ENCODE measurements at regions of chr9 and their contacts with region 1.

Region 1: DNA sequence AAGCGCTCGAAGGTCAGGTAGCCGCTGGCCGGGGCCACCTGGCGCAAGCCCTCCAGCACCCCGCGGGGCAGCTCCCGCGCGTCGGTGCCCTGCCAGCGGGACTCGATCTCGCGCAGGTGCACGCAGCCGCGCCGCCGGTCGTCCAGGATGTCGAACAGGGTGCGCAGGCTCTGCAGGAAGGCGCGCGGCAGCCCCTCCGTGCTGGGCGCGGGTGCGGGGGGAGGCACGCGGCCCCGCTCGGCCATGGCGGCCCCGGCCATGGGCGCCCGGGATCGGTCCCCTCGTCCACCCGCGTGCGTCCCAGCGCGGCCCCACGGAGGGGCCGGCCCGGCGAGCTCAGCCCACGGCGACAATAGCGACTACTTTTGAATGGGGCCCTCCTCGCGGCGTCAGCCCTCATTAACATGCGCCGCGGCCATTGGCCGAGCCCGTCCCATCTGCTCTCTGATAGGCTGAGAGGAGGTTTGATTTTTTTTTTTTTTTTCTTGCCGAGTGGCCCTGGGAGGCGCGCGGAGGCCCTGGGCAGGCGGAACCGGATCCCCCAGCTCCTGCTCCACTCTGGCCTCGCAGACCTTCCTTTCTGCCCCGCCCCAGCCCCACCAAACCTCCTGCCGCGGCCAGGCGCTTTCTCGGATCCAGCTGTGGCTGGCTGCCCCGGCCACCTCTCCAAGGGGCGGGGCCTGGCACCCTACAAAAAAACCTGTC is at the start of gene SAPCD2:
- DNase-seq: peak; percentile 90
- ATAC-seq: peak; percentile 90
- H3K4me3 Mint-ChIP-seq: peak within 1 kb of the TSS; percentile 82
- H3K27ac Mint-ChIP-seq: peak within 1 kb of the TSS; percentile 91
- H3K4me1 Mint-ChIP-seq: peaks cover 22% of the 10 kb centered on the region
- H3K27me3 Mint-ChIP-seq: no peaks in the 10 kb centered on the region
- total RNA-seq, gene SAPCD2: 26.4 to 30.0 TPM

Region 2: GRCh38 chr9:137086531-137087408 is 16.4 kb after region 1 on chr9 and contains the start of gene MAN1B1:
- POLR2A ChIA-PET with region 1: interaction called, 75 read pairs
- DNase-seq: peak; percentile 99
- ATAC-seq: peak; percentile 89
- H3K4me3 Mint-ChIP-seq: peak within 1 kb of the TSS; percentile 92
- H3K27ac Mint-ChIP-seq: peak within 1 kb of the TSS; percentile 93
- H3K4me1 Mint-ChIP-seq: peaks cover 23% of the 10 kb centered on the region
- H3K27me3 Mint-ChIP-seq: no peaks in the 10 kb centered on the region
- total RNA-seq, gene MAN1B1: 63.2 to 63.9 TPM

Region 3: GRCh38 chr9:137095664-137096517 is 25.5 kb after region 1 on chr9:
- POLR2A ChIA-PET with region 1: interaction called, 17 read pairs
- DNase-seq: peak; percentile 87
- ATAC-seq: peak; percentile 99
- H3K4me3 Mint-ChIP-seq: peak overlapping the region; percentile 85
- H3K27ac Mint-ChIP-seq: peak overlapping the region; percentile 96
- H3K4me1 Mint-ChIP-seq: peaks cover 16% of the 10 kb centered on the region
- H3K27me3 Mint-ChIP-seq: no peaks in the 10 kb centered on the region

Region 4: DNA sequence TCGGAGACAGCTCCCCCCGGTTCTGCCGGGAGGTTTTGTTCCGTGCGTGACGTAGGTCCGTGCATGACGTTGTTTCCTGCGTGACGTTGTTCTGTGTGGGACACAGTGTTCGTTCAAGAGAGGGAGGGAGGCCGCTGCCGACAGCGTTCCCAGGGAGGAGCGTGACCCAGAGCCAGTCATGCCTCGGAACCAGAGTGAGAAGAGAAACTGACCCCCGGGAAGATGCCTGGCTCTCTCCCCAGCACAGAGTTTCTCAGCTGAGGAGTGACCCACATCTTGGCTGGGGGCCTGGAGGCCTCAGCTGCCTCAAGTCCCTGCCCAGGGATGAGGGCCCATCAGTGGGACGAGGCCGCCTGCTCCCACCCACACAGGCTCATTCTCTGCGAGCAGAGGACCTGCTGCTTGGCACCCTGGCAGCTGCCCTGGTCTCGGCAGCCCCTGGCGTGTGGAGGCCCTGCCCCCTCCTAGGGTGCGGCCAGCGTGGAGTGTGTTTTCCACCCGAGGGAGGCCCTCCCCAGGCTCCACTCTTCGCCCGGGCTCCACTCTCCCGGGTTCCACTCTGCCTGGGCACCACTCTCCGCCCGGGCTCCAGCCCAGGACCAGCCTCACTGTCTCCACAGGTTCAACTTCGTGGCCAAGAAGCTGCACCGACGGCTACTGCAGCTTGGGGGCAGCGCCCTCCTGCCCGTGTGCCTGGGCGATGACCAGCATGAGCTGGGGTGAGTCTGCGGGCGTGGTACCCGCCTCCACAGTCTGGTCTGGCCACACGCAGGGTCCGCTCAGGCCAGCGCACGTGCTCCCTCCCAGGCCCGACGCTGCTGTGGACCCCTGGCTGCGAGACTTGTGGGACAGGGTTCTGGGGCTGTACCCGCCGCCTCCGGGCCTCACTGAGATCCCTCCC is 143.1 kb after region 1 on chr9:
- POLR2A ChIA-PET with region 1: no interaction called
- DNase-seq: no peak
- ATAC-seq: no peak
- H3K4me3 Mint-ChIP-seq: no peak overlapping the region
- H3K27ac Mint-ChIP-seq: no peak overlapping the region
- H3K4me1 Mint-ChIP-seq: peaks cover 2% of the 10 kb centered on the region
- H3K27me3 Mint-ChIP-seq: no peaks in the 10 kb centered on the region

Measured in activated naive CD8-positive, alpha-beta T cell treated with anti-CD3 and anti-CD28 coated beads, Interleukin-2, amount 10 ng/mL, durations not matched to agents 7 days and 5 days (primary cell).